A673 (cell line): ENCODE measurements at regions of chr5 and their contacts with region 1.

Region 1: DNA sequence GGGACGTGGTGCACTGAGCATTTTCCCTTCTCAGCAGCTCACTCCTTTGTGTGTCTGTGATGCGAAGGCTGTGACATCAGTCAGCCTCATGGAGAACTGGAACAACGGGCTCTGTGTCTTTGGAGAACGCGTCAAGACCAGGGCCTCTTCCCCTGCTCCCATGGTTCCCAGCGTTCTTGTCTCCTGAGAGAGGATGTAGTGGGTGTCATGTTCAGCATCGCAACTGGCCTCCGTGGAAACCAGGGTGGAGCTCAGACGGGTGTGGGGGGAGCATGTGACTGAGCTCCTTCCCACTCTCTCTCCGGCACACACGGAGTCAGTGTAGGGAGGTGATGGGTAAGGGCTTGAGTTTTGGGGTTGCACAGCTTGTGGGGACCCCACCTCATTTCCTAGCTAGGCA is 59.7 kb downstream of the TENT4A start:
- DNase-seq: peak; percentile 71
- H3K4me3 ChIP-seq: no peak overlapping the region
- H3K27ac ChIP-seq: peak overlapping the region; percentile 27
- H3K4me1 ChIP-seq: peaks cover 9% of the 10 kb centered on the region
- H3K27me3 ChIP-seq: no peaks in the 10 kb centered on the region
- CTCF ChIP-seq: no peak

Region 2: DNA sequence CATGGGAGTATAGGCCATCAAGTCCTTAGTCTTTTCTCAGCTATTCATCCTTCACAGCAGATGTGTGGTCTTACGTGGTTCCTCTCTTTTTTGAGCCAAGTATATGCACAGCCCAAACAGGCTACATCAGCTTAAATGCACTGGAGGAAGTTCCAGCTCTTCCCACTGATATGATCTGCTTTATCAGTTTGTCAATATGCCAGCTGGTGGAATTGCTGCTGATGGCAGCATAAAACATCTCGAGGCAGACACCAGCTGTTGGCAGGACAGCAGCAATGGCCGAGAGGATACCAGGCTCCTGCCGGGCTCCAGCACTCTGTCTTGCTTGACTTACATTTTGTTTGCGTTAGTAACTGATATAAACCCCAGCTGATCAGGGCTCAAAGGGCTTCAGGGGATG is 83.8 kb after region 1 on chr5:
- CTCF ChIA-PET with region 1: no interaction called
- POLR2A ChIA-PET with region 1: no interaction called
- intact Hi-C with region 1: no loop called
- DNase-seq: no peak
- H3K4me3 ChIP-seq: no peak overlapping the region
- H3K27ac ChIP-seq: no peak overlapping the region
- H3K4me1 ChIP-seq: no peaks in the 10 kb centered on the region
- H3K27me3 ChIP-seq: no peaks in the 10 kb centered on the region
- CTCF ChIP-seq: no peak

Region 3: DNA sequence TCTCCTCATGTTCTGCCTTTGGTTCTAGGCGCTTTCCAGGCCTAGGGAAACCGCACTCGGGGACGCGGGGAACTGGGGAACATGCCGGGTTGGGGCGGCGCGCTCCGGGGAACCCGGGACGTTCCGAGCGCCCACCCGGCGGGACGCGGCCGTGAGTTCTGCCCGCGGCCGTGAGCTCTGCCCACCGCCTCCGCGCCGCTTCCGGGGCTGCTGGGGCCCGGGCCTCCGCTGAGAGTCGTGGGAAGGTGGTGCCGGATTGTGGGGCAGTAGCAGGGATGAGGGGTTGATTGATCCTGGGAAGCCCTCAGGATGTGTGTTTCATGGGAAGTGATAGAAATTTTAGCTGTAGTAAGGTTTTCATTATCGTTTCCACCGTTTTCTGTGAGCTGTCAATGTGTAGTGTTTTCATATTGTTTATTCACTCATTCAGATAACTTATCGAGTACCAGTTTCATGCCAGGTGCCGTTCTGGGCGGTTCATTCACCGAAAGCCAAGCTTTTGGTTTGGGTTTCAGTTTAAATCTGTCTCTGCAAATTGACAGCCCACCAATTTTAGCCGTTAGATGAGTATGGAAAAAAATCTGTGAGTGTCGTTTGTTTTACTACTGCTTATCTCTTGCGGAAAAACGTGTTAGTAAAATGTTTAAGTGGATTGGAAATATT is 1096.7 kb after region 1 on chr5:
- CTCF ChIA-PET with region 1: no interaction called
- POLR2A ChIA-PET with region 1: no interaction called
- intact Hi-C with region 1: loop called (anchors 10 kb)
- DNase-seq: peak; percentile 14
- H3K4me3 ChIP-seq: peak overlapping the region; percentile 95
- H3K27ac ChIP-seq: peak overlapping the region; percentile 95
- H3K4me1 ChIP-seq: peaks cover 15% of the 10 kb centered on the region
- H3K27me3 ChIP-seq: no peaks in the 10 kb centered on the region
- CTCF ChIP-seq: no peak